H1 (cell line): ENCODE measurements at regions of chr15 and their contacts with region 1.

Region 1: GRCh38 chr15:70488002-70488605 is 275.3 kb downstream of the UACA start:
- DNase-seq: peak in 1 of 2 experiments; percentile 87
- H3K4me3 ChIP-seq: no peak overlapping the region
- H3K27ac ChIP-seq: no peak overlapping the region
- H3K4me1 ChIP-seq: no peaks in the 10 kb centered on the region; a peak in 1 of 7 replicates
- H3K27me3 ChIP-seq: no peaks in the 10 kb centered on the region
- CTCF ChIP-seq: peak; percentile 84 to 96 (median 87)
- EP300 ChIP-seq: no peak
- POLR2A ChIP-seq: no peak
- RAD21 ChIP-seq: peak; percentile 97 to 99

Region 2: GRCh38 chr15:70474471-70475396 is 13.4 kb before region 1 on chr15:
- CTCF ChIA-PET with region 1: interaction called, 65 read pairs
- POLR2A ChIA-PET with region 1: no interaction called
- DNase-seq: no peak
- H3K4me3 ChIP-seq: no peak overlapping the region
- H3K27ac ChIP-seq: no peak overlapping the region
- H3K4me1 ChIP-seq: no peaks in the 10 kb centered on the region
- H3K27me3 ChIP-seq: no peaks in the 10 kb centered on the region
- CTCF ChIP-seq: no peak
- EP300 ChIP-seq: no peak
- POLR2A ChIP-seq: no peak
- RAD21 ChIP-seq: no peak

Region 3: DNA sequence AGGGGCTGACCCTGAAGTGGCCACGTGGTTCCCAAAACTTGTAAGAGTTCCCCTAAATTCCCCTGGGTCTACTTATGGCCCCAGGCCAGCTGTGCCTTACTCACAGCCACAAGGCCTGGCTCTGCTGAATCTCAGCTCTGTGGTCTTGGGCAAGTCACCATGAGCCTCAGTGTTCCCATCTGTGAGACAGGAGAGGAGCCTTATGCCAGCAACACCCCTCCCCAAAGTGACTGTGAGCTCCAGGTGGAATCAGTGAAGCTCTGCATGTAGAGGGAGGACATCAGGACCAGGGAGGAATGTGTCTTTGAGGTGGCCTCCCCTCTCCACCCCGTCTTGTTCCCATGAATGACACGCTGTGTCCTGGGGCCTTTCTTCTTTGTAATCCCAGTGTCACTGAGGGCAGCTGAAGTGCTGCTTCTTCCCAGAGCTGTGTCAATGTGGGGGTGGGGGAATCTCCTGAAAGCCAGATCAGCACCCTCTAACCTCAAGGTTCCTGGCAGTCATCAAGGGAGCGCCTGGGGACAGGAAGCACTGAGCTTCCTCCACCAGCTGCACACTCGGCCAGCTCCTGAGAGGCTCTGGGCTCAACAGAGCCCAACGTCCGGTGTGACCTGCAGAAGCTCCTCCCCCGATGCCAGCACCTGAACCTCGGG is 16.3 kb after region 1 on chr15:
- CTCF ChIA-PET with region 1: interaction called, 20 read pairs
- POLR2A ChIA-PET with region 1: no interaction called
- DNase-seq: no peak
- H3K4me3 ChIP-seq: no peak overlapping the region
- H3K27ac ChIP-seq: no peak overlapping the region
- H3K4me1 ChIP-seq: peaks cover 9 to 25% (median 20%) of the 10 kb centered on the region in 4 experiments
- H3K27me3 ChIP-seq: no peaks in the 10 kb centered on the region
- CTCF ChIP-seq: no peak
- EP300 ChIP-seq: no peak
- POLR2A ChIP-seq: no peak
- RAD21 ChIP-seq: no peak

Region 4: GRCh38 chr15:70512772-70513362 is 24.8 kb after region 1 on chr15:
- CTCF ChIA-PET with region 1: interaction called, 19 read pairs
- POLR2A ChIA-PET with region 1: no interaction called
- DNase-seq: peak; percentile 53 to 80
- H3K4me3 ChIP-seq: no peak overlapping the region
- H3K27ac ChIP-seq: no peak overlapping the region
- H3K4me1 ChIP-seq: peaks cover 0 to 6% (median 3%) of the 10 kb centered on the region in 4 experiments; a peak in 4 of 7 replicates
- H3K27me3 ChIP-seq: no peaks in the 10 kb centered on the region
- CTCF ChIP-seq: peak; percentile 99 to 100 (median 100)
- EP300 ChIP-seq: no peak
- POLR2A ChIP-seq: no peak
- RAD21 ChIP-seq: peak; percentile 91 to 96

Region 5: DNA sequence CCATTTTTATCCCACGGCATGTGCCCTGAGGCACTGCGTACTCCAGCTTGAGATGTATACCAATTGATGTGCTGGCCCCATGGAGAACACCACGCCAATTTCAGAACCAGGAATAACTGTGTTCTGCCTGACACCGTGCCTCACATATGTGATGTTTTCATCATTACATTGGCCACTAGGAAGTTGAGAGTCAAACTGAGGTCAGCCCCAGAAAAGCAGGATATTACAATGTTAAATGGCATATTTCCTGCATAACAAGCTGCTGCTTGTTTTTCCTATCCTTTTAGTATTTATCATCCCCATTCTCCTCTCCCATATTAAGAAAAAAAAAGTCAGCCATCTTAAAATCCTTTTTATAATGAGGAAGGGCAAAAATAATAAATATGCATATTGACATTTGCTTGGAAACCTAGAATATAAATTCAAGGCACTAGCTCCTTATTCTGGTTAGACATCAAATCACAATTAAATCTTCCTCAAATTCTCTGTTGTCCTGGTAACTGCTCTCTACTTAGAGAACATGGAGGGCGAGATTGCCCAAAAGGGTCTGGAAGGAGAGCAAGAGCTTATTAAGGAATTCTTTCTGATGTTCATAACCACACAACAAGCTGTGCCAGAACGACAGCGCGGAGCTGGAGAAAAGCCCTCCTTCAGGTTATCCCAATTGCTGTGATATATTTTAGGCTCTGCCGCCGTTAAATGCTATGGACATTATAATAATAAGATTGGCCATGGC is 162.6 kb after region 1 on chr15:
- CTCF ChIA-PET with region 1: no interaction called
- POLR2A ChIA-PET with region 1: no interaction called
- DNase-seq: no peak
- H3K4me3 ChIP-seq: no peak overlapping the region
- H3K27ac ChIP-seq: no peak overlapping the region
- H3K4me1 ChIP-seq: no peaks in the 10 kb centered on the region
- H3K27me3 ChIP-seq: no peaks in the 10 kb centered on the region
- CTCF ChIP-seq: no peak
- EP300 ChIP-seq: no peak
- POLR2A ChIP-seq: no peak
- RAD21 ChIP-seq: no peak